ENCODE measurements at regions of chr5 and their contacts with region 1.

Region 1: DNA sequence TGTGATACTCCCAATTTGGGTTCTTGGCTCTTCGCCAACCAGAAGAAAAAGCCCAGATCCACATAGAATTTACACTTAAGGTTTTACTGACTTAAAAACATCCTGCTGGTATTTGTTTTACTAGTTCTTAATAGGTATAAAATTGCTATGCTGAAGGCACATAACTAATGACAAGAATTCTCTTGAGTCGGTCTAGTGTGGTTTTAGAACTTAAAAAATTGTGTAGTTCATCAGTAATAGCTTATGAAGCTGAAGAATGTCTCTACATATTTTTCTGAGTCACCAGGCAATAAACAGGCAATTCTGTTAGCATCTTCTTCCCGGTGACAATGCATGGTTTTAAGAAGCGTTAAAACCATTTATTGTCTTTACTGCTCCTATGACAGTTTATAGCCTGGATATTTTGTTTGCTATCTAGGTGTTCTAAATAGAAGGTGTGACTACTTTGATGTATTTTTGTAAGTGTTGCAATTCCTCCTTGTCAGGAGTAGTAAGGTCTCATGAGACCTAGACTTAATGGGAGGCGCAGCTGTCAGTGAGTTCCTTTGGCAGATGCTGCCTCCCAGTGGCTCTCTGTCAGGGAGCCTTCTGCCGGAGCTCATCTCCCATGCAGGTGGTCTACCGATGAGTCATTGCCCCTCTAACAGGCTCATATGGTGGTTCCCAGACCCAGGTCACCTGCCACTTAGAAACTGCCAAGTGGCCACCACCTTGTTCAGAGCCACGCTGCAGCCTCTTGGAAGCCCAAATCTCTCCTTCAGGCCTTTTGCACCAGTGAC is 173.8 kb downstream of the MAST4 start:
- DNase-seq: peak; percentile 8
- H3K4me3 ChIP-seq: no peak overlapping the region
- H3K27ac ChIP-seq: no peak overlapping the region
- H3K4me1 ChIP-seq: no peaks in the 10 kb centered on the region
- H3K27me3 ChIP-seq: no peaks in the 10 kb centered on the region
- CTCF ChIP-seq: no peak
- EP300 ChIP-seq: no peak
- POLR2A ChIP-seq: no peak

Region 2: GRCh38 chr5:65562731-65563701 is 1207.0 kb before region 1 on chr5 and contains the starts of genes CENPK and PPWD1:
- in situ Hi-C with region 1: no loop called
- intact Hi-C with region 1: no loop called
- DNase-seq: peak; percentile 95
- H3K4me3 ChIP-seq: peak within 1 kb of the TSS; percentile 65 to 89 (median 76)
- H3K27ac ChIP-seq: peak within 1 kb of the TSS; percentile 81 to 93 (median 88)
- H3K4me1 ChIP-seq: peaks cover 0 to 30% (median 22%) of the 10 kb centered on the region in 4 donors
- H3K27me3 ChIP-seq: no peaks in the 10 kb centered on the region
- CTCF ChIP-seq: no peak
- EP300 ChIP-seq: no peak
- POLR2A ChIP-seq: peak; percentile 74
- total RNA-seq, gene CENPK: 2.0 to 7.6 (median 5.2) TPM in 3 of 4 donors, not detected in the other
- total RNA-seq, gene PPWD1: 9.0 to 52.1 (median 39.2) TPM

Region 3: DNA sequence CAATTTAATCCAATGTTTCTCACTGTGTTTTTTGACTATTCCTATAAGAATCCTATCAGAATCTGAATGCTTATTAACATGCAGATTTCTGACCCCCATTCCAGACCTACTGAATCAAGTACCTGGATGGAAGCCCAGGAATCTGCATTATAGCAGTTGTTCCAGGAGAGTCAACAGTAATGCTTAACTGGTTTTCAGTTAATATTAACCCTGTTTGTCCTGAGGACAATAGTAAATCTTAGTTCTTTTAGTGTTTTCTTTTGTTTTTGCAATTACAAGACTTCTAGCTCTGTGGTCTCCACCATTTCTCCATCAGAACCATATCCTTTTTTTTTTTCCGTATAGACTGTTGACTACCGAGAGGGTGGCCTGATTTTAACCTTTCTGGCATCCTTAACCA is 457.7 kb before region 1 on chr5:
- in situ Hi-C with region 1: loop called in 3 of 4 experiments (anchors 10 kb)
- intact Hi-C with region 1: no loop called
- DNase-seq: no peak
- H3K4me3 ChIP-seq: no peak overlapping the region
- H3K27ac ChIP-seq: no peak overlapping the region
- H3K4me1 ChIP-seq: no peaks in the 10 kb centered on the region
- H3K27me3 ChIP-seq: no peaks in the 10 kb centered on the region
- CTCF ChIP-seq: no peak
- EP300 ChIP-seq: no peak
- POLR2A ChIP-seq: no peak

Region 4: DNA sequence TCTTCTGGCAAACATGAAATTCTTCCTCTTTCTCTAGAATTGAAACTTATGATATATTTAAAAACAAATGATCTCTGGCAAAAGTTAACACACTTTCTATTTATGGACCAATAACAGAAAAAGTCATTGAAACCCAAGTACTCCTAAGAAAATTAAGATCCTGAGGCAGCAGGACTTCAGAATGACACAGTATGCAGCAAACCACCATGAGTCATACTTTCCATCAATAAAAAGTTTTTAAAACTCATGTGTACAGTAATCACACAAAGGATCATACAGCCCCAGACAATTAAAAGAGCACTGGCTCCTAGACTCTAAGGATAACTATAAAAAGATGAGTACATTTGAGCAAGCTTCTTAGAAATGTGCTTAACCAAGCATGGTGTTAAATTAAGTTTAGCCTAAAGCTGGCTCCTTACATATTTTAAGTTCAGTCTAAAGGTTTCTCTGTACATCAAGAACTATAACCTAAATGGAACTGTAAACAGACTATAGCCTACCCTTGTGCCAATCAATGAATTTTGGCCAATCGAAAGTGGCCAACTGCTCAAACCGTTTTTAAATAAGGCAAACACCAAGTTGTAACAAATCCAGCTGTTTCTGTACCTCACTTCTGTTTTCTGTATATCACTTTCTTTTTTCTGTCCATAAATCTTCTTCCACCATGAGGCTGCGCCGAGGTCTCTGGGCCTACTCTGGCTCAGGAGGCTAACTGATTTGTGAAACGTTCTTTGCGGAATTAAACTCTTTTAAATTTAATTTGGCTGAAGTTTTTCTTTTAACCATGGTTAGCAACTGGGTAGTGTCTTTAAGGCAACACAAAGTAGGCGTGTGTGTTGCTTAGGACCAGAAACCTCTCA is 1213.5 kb after region 1 on chr5:
- in situ Hi-C with region 1: no loop called
- intact Hi-C with region 1: no loop called
- DNase-seq: no peak
- H3K4me3 ChIP-seq: no peak overlapping the region
- H3K27ac ChIP-seq: peak overlapping the region in 2 of 4 donors; percentile 6 to 27
- H3K4me1 ChIP-seq: peaks cover 0 to 13% (median 4%) of the 10 kb centered on the region in 4 donors
- H3K27me3 ChIP-seq: no peaks in the 10 kb centered on the region
- CTCF ChIP-seq: no peak
- EP300 ChIP-seq: no peak
- POLR2A ChIP-seq: no peak